ENCODE measurements at regions of chr20 and their contacts with region 1.

Region 1: GRCh38 chr20:16263582-16263981 is 309.7 kb downstream of the KIF16B start:
- DNase-seq: no peak
- H3K4me3 ChIP-seq: no peak overlapping the region
- H3K27ac ChIP-seq: no peak overlapping the region
- H3K4me1 ChIP-seq: no peaks in the 10 kb centered on the region
- H3K27me3 ChIP-seq: no peaks in the 10 kb centered on the region
- CTCF ChIP-seq: no peak
- EP300 ChIP-seq: no peak
- POLR2A ChIP-seq: no peak
- RAD21 ChIP-seq: no peak

Region 2: GRCh38 chr20:16279320-16279719 is 15.7 kb after region 1 on chr20:
- CTCF ChIA-PET with region 1: interaction called, 12 read pairs
- POLR2A ChIA-PET with region 1: no interaction called
- DNase-seq: peak in 1 of 2 experiments; percentile 2
- H3K4me3 ChIP-seq: no peak overlapping the region
- H3K27ac ChIP-seq: no peak overlapping the region
- H3K4me1 ChIP-seq: peaks cover 0 to 2% (median 0%) of the 10 kb centered on the region in 4 experiments; a peak in 1 of 7 replicates
- H3K27me3 ChIP-seq: no peaks in the 10 kb centered on the region
- CTCF ChIP-seq: peak in 2 of 3 experiments; percentile 20 to 29; a peak in 2 of 4 replicates
- EP300 ChIP-seq: no peak
- POLR2A ChIP-seq: no peak
- RAD21 ChIP-seq: peak; percentile 52 to 59

Measured in H1 (cell line).